ENCODE measurements at regions of chr2 and their contacts with region 1.

Region 1: GRCh38 chr2:183038341-183039300 is at the start of gene NCKAP1:
- DNase-seq: peak; percentile 75 to 89
- ATAC-seq: peak; percentile 72 to 77
- H3K4me3 ChIP-seq: peak within 1 kb of the TSS; percentile 61 to 87 (median 78)
- H3K27ac ChIP-seq: peak within 1 kb of the TSS; percentile 96 to 99 (median 97)
- H3K4me1 ChIP-seq: peaks cover 33 to 36% of the 10 kb centered on the region in 2 donors
- H3K27me3 ChIP-seq: no peaks in the 10 kb centered on the region
- CTCF ChIP-seq: peak; percentile 80 to 99 (median 99)
- POLR2A ChIP-seq: peak; percentile 51 to 73
- total RNA-seq, gene NCKAP1: 152 to 303 (median 168) TPM

Region 2: DNA sequence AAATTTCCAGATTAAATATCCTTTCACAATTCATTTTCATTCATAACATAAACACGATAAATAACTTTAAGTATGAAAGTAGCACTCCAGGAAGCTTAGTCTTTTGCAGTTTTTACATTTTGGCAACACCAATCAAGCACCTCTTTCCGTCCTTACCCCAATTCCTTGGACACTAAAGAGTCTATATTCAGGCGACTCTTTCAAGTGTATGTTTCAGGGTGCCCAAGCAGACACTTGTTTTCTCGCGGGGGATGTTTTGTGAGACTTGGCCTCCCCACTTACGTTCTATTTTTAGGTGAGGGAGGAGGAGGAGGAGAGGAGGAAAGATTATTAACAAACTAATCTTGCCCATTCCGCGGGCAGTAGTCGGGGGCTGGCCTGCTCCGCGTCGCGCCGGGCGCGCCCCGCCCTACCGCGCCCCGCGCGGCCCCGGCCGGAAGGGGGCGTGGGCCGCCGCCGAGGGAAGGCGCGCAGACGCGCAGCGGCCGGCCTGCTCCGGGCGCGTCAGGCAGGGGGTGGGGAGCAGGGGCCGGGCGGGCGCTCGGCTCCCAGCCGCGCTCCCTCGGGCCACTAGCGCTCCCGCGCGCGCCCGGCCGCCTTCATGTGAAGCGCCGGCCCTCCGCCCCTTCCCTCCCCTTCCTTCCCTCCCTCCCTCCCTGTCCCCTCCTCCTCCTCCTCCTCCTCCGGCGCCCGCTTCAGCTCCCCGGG is 1147.2 kb before region 1 on chr2 and contains the start of gene ITPRID2:
- in situ Hi-C with region 1: no loop called
- intact Hi-C with region 1: loop called (anchors 5 kb)
- DNase-seq: peak; percentile 66 to 73
- ATAC-seq: peak; percentile 75 to 78
- H3K4me3 ChIP-seq: peak within 1 kb of the TSS; percentile 81 to 96 (median 84)
- H3K27ac ChIP-seq: peak within 1 kb of the TSS; percentile 98 to 99 (median 98)
- H3K4me1 ChIP-seq: peaks cover 33 to 46% of the 10 kb centered on the region in 2 donors
- H3K27me3 ChIP-seq: no peaks in the 10 kb centered on the region
- CTCF ChIP-seq: peak in 4 of 5 experiments; percentile 32 to 57 (median 38)
- POLR2A ChIP-seq: peak in 1 of 2 donors; percentile 58
- total RNA-seq, gene ITPRID2: 38.7 to 91.9 (median 42.5) TPM

Region 3: GRCh38 chr2:182763311-182763912 is 275.2 kb before region 1 on chr2:
- in situ Hi-C with region 1: no loop called
- intact Hi-C with region 1: loop called (anchors 5 kb)
- DNase-seq: no peak
- ATAC-seq: peak; percentile 60 to 69
- H3K4me3 ChIP-seq: no peak overlapping the region
- H3K27ac ChIP-seq: peak overlapping the region in 1 of 4 donors; percentile 21
- H3K4me1 ChIP-seq: peaks cover 3 to 10% of the 10 kb centered on the region in 2 donors
- H3K27me3 ChIP-seq: no peaks in the 10 kb centered on the region
- CTCF ChIP-seq: peak; percentile 35 to 69 (median 51)
- POLR2A ChIP-seq: no peak

Region 4: DNA sequence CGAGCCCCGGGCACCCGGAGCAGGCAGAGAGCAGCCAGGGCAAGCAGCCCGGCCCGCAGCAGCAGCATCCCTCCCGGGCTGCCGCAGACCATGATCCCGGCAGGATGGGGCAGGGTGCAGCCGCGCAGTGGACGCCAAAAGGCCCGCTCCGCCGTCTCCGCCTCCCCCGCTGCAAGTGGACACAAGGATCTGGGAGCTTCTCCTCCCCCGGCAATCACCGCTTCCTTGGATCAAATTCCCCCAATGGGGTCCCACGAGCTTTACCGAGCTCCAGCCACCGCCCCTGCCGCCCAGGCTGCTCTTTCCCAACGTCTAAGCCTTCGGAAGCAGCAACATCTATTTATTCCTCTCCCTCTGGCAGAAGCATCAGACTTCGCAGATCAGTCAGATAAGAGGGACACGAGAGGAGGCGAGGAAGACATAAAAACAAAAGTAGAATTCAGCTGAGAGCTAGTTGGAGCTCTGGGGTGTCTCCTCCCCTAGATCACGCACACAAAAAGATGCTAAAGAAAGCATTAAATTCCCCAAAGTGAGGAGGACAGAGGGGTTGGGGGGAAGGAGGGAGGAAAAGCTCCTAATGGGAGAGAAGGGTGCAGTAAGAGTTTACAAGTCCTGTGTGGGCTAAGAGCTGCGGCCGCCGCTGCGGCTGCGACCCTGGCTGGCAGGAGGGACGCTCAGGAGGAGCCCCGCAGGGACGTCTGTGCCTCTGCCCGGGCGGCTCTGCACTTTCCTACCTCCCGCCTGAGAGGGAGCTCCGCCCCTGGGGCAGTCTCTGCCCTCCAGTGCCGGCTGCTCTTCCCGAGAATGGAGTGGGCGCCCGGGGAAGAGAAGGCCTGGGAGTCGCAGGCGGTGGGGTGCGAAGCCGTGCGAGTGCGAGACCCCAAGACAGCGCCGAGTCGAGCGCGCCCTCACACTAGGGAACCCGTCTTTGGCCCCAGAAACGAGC is 171.9 kb before region 1 on chr2 and contains the start of gene FRZB:
- in situ Hi-C with region 1: no loop called
- intact Hi-C with region 1: loop called (anchors 10 kb)
- DNase-seq: peak; percentile 36 to 76
- ATAC-seq: peak; percentile 79 to 84
- H3K4me3 ChIP-seq: peak within 1 kb of the TSS; percentile 52 to 74 (median 61)
- H3K27ac ChIP-seq: peak within 1 kb of the TSS; percentile 49 to 75 (median 69)
- H3K4me1 ChIP-seq: peaks cover 12 to 20% of the 10 kb centered on the region in 2 donors
- H3K27me3 ChIP-seq: peaks cover 0 to 2% (median 0%) of the 10 kb centered on the region in 3 donors
- CTCF ChIP-seq: no peak
- POLR2A ChIP-seq: peak; percentile 33 to 51
- total RNA-seq, gene FRZB: 1.3 to 31.3 (median 4.3) TPM

Region 5: DNA sequence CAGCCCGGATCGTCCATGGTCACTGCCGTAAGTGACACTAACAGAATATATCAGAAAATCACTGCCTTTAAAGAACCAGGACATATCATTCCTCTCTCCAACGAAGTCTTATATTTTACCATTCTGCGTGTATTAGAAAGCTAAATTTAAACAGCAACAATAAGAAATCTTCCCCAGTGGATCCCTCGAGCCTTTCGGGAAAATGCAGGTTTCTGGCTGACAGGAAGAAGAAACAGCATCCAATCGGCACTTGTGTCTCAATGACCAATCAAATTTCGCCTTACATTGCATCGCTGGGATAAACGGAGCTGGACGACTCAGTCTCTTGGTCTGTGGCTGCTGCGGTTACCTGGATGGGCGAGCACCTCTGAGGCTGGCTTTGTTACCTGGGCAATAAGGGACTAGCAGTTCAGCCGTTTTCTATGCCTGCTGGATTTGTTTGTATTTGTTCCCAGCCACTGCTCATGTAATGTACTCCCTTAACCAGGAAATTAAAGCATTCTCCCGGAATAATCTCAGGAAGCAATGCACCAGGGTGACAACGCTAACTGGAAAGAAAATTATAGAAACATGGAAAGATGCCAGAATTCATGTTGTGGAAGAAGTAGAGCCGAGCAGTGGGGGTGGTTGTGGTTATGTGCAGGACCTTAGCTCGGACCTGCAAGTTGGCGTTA is 40.0 kb after region 1 on chr2 and contains the start of gene DUSP19:
- in situ Hi-C with region 1: no loop called
- intact Hi-C with region 1: loop called (anchors 1 kb)
- DNase-seq: peak; percentile 74 to 92
- ATAC-seq: peak; percentile 99
- H3K4me3 ChIP-seq: peak within 1 kb of the TSS; percentile 77 to 92 (median 88)
- H3K27ac ChIP-seq: peak within 1 kb of the TSS; percentile 78 to 84 (median 80)
- H3K4me1 ChIP-seq: peaks cover 0 to 9% of the 10 kb centered on the region in 2 donors
- H3K27me3 ChIP-seq: no peaks in the 10 kb centered on the region
- CTCF ChIP-seq: no peak
- POLR2A ChIP-seq: peak; percentile 44 to 66
- total RNA-seq, gene DUSP19: 0.47 to 5.9 (median 2.1) TPM

Region 6: GRCh38 chr2:183124222-183124956 is 85.8 kb after region 1 on chr2 and contains the start of gene NUP35:
- in situ Hi-C with region 1: no loop called
- intact Hi-C with region 1: loop called (anchors 2 kb)
- DNase-seq: peak; percentile 66 to 76
- ATAC-seq: peak; percentile 99
- H3K4me3 ChIP-seq: peak within 1 kb of the TSS; percentile 78 to 99 (median 82)
- H3K27ac ChIP-seq: peak within 1 kb of the TSS; percentile 85 to 90 (median 88)
- H3K4me1 ChIP-seq: peaks cover 12 to 16% of the 10 kb centered on the region in 2 donors
- H3K27me3 ChIP-seq: no peaks in the 10 kb centered on the region
- CTCF ChIP-seq: no peak
- POLR2A ChIP-seq: no peak
- total RNA-seq, gene NUP35: 3.6 to 9.7 (median 5.6) TPM